GM10248 (cell line): ENCODE measurements at regions of chr4 and their contacts with region 1.

Region 1: DNA sequence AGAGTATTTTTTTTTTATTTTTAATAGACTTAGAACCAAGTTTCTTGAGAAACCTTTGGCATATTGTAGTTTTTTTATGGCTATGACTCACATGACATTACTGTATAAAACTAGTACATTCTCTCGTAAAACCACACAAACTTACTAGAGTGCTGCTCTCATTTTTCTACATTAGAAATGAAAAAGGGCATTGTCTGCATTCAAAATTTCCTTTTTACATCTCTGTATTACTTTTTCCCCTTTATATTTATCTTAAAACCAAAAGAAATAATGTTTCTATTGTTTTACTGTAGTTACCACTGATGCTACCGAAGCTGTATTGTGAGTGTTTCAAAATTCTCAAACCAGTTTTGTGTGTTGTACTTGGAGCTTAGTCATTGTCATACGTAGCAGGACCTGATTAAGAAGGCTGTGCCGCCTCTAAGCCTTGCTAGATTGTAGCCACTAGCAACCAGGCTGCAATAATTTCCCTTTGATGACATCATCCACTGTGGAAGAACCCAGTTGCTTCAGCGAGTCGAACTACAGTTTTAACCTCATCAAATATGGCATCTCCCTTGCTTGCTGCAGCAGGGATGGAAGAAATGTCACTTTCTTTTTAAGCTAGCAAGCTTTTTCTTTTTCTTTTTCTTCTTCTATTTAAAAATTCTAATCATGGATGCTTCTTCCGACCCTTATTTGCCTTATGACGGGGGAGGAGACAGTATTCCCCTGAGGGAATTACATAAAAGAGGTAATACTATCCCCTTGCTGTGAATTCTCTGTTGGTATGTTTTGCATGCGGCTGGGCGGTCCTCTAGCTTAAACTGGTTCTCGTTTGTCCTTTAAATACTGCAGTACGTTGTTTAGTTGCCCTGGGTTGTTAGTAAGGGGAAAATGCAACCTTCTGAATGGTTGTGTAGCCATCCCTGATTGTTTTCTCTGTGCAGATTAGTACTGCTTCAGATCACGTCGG is 39.6 kb downstream of the CLCN3 start:
- DNase-seq: peak; percentile 55
- CTCF ChIP-seq: no peak

Region 2: GRCh38 chr4:169640261-169640870 is 19.6 kb before region 1 on chr4:
- CTCF ChIA-PET with region 1: interaction called, 12 read pairs
- POLR2A ChIA-PET with region 1: no interaction called
- DNase-seq: no peak
- CTCF ChIP-seq: no peak

Region 3: GRCh38 chr4:169649545-169650226 is 10.3 kb before region 1 on chr4:
- CTCF ChIA-PET with region 1: interaction called, 11 read pairs
- POLR2A ChIA-PET with region 1: no interaction called
- DNase-seq: no peak
- CTCF ChIP-seq: no peak